ENCODE measurements at regions of chr20 and their contacts with region 1.

Region 1: DNA sequence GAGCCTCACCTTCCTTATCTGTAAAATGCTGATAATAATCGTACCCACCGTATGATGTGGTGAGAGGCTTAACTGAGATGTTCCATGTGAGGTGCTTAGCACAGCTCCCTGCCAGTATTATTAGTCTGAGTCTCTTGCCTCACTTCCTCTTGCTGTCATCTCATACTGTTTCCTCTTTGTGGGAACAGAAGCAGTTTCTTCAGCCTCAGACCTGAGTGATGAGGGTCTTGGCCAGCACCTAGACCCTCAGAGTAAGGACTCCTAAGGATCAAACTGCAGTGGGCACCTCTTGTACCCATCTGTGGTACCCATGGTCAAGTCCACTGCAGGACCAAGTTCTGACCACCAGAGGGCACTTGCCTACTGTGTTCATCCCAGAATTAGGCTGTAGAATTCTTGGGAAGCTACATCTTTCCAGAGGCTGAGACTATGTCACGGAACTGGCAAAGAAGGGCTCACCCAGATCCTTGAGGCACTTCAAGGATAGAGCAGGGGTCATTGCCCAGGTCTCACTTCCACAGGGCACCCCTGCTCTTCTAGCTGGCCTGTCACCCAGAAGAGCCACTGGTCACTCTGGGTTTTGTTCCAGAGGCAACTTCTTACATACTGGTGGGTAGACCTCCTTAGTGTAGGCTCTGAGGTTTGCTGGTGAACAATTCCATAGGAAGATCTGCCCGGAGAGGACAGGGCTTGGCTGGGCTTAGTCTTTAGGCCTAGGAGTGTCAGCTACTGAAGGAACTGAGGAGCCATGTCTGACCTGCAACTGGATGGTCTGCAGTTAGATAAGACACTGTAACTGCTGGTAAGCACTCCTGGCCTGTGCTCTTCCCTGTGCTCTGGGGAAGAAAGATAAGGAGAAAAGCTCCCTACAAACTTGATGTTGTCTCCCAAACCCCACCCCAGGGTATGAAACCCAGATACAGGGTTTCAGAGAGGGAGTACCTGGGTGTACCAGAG is 20.6 kb upstream of the SGK2 start:
- DNase-seq: no peak
- H3K4me3 ChIP-seq: no peak overlapping the region
- H3K27me3 ChIP-seq: no peaks in the 10 kb centered on the region
- CTCF ChIP-seq: peak; percentile 96

Region 2: DNA sequence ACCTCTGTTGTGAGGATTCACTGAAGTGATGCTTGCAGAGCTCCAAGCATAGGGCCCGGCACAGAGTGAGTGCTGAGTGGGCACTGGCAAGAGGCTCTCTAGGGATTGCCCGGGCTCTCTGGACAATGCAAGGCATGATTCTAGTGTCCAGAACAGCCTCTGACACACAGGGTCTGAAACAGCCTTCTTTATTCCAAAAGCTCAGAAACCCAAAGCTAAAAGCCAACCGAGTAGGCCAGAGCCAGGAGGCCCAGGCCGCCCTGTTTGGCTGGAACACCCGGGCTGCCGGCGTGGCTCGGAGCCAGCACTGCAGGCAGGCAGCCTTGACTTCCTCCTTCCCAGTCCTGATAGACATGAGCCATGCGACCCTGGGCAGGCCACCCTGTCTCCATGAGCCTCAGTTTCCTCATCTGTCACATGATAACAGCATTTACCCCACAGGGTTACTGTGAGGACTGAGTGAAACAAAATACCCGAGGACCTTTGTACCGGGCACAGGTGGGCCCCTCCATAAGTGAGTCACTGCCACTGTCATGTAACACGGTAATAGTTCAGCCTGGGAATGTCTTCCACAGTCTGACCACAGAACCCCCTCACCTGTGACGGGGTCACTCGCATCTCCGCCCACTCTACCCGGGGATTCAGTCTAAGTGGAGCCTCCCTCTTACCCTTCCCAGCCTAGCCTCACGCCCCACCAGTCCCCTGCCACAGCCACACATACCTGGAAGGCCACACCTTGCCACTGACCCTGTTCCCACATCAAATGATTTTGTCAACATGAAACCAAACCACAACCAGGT is 399.9 kb before region 1 on chr20:
- CTCF ChIA-PET with region 1: no interaction called
- POLR2A ChIA-PET with region 1: no interaction called
- DNase-seq: no peak
- H3K4me3 ChIP-seq: no peak overlapping the region
- H3K27me3 ChIP-seq: no peaks in the 10 kb centered on the region
- CTCF ChIP-seq: no peak

Region 3: GRCh38 chr20:43558412-43559146 is 20.4 kb after region 1 on chr20 and contains the start of gene SGK2:
- CTCF ChIA-PET with region 1: interaction called, 27 read pairs
- POLR2A ChIA-PET with region 1: no interaction called
- DNase-seq: no peak
- H3K4me3 ChIP-seq: no peak within 1 kb of the TSS
- H3K27me3 ChIP-seq: no peaks in the 10 kb centered on the region
- CTCF ChIP-seq: no peak
- polyA plus RNA-seq, gene SGK2: 0.16 and 0.47 TPM in 2 replicates

Region 4: GRCh38 chr20:43570496-43570895 is 32.3 kb after region 1 on chr20:
- CTCF ChIA-PET with region 1: interaction called, 11 read pairs
- POLR2A ChIA-PET with region 1: no interaction called
- DNase-seq: no peak
- H3K4me3 ChIP-seq: no peak overlapping the region
- H3K27me3 ChIP-seq: no peaks in the 10 kb centered on the region
- CTCF ChIP-seq: no peak

Region 5: GRCh38 chr20:43583982-43584432 is 45.8 kb after region 1 on chr20:
- CTCF ChIA-PET with region 1: interaction called, 21 read pairs
- POLR2A ChIA-PET with region 1: no interaction called
- DNase-seq: peak; percentile 86
- H3K4me3 ChIP-seq: no peak overlapping the region
- H3K27me3 ChIP-seq: no peaks in the 10 kb centered on the region
- CTCF ChIP-seq: no peak

Region 6: GRCh38 chr20:43590392-43591323 is 52.5 kb after region 1 on chr20 and contains the start of gene IFT52:
- CTCF ChIA-PET with region 1: interaction called, 21 read pairs
- POLR2A ChIA-PET with region 1: no interaction called
- DNase-seq: peak; percentile 43
- H3K4me3 ChIP-seq: peak within 1 kb of the TSS; percentile 96
- H3K27me3 ChIP-seq: no peaks in the 10 kb centered on the region
- CTCF ChIP-seq: no peak
- polyA plus RNA-seq, gene IFT52: 47.4 and 47.6 TPM in 2 replicates

Region 7: GRCh38 chr20:43691928-43692524 is 153.8 kb after region 1 on chr20:
- CTCF ChIA-PET with region 1: interaction called, 119 read pairs
- POLR2A ChIA-PET with region 1: interaction called, 3 read pairs
- DNase-seq: no peak
- H3K4me3 ChIP-seq: no peak overlapping the region
- H3K27me3 ChIP-seq: no peaks in the 10 kb centered on the region
- CTCF ChIP-seq: peak; percentile 79

Region 8: DNA sequence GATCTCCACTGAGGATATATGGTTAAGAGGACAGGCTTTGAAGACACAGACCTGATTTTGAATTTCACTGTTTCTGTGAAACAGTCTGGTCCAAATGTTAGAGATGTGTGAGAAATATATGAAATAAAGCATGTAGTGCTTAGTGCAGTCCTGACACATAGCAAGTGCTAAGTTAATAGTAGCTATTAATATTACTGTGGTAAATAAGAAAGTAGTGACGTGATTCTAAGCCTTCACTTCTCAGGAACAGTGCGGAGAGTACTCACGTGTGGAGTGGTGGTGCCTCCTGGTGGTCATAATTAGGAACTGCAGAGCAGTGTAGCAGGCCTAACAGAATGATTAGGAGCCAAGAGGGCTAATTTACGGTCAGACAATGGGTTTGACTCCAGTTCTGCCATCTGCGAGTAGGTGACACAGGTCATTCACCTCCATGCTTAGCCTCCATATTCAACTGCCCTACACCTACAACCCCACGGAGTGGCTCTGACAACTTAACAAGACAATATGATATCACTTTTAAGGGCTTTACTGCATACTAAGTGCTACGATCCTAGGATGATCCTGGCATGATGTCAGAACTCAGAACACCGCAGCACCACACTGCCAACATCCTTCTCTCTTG is 542.6 kb after region 1 on chr20:
- CTCF ChIA-PET with region 1: interaction called, 10 read pairs
- POLR2A ChIA-PET with region 1: no interaction called
- DNase-seq: no peak
- H3K4me3 ChIP-seq: no peak overlapping the region
- H3K27me3 ChIP-seq: no peaks in the 10 kb centered on the region
- CTCF ChIP-seq: peak; percentile 94